AG04449 (cell line): ENCODE measurements at regions of chr16 and their contacts with region 1.

Region 1: DNA sequence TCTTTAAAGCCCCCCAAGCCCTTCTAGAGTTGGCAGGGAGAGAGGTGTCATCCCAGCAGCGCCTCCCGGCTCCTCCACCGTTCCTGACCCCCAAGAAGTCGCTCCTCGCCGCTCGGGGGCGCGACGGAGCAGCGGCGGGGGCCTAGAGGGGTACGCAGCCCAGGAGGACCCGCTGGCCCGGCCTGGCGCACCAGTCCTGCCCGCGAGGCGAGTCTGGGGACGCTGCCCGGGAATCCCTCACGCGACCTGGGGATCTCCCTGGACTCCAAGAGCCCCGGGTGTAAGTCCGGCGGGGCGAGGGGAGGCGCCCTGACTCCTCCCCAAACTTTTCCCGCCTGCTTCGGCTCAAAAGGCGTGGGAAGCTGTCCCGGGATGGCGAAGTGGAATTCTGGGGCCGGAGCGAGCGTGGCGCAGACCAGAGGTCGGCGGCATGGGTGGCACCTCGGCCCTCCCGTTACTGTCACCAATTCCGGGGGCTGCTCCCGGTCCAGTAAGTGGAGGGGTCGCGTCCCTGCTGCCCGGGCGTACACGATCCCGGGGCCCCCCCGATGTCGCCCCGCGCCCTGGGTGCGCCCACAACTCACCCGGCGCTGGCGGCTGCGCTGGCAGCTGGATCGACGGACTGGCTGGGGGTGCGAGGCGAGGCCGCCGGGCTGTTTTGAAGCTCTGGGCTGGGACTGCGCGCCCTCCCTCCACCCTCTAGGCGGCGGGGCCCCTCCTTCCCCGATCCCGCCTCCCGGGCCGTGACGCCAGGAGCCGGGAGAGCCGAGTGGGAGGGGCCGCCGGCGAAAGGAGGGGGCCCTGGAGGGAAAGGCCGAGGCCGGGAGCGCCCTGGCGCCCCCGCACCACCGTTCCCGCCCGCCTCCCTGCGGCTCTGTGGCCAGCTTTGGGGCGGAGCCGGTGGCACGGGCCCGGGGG is at the start of gene EMP2:
- DNase-seq: no peak
- H3K4me3 ChIP-seq: peak within 1 kb of the TSS; percentile 78
- CTCF ChIP-seq: peak; percentile 88

Region 2: GRCh38 chr16:10566589-10566988 is 13.6 kb before region 1 on chr16:
- CTCF ChIA-PET with region 1: interaction called, 35 read pairs
- POLR2A ChIA-PET with region 1: no interaction called
- DNase-seq: no peak
- H3K4me3 ChIP-seq: no peak overlapping the region
- CTCF ChIP-seq: no peak

Region 3: GRCh38 chr16:10609402-10609774 is 29.2 kb after region 1 on chr16:
- CTCF ChIA-PET with region 1: interaction called, 10 read pairs
- POLR2A ChIA-PET with region 1: no interaction called
- DNase-seq: peak; percentile 47
- H3K4me3 ChIP-seq: no peak overlapping the region
- CTCF ChIP-seq: peak; percentile 2